Ascending aorta (tissue), 2 donors: ENCODE measurements at regions of chr11 and their contacts with region 1.

Region 1: DNA sequence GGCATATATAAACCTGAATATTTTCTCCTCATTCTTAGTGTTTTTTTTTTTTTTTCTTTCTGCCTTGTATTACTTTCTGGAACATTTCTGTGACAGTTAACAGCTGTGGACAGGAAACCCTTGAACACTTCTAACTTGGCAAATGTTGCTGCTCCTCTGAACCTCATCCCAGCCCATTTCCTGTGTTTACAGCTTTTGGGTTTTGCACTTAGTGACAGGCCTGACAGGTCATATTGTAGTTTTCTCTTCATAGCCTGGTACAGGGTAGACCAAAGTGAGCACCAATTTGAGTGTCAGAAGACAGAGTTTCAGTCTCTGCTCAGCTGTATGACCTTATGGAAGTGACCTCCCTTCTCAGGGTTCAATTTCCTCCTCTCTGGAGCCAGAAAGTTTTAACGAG is 91.6 kb downstream of the STIM1 start:
- DNase-seq: peak in 1 of 2 donors; percentile 67
- H3K4me3 ChIP-seq: no peak overlapping the region
- H3K27ac ChIP-seq: peak overlapping the region; percentile 85 to 88
- H3K4me1 ChIP-seq: peaks cover 51 to 79% of the 10 kb centered on the region in 2 donors
- H3K27me3 ChIP-seq: no peaks in the 10 kb centered on the region
- CTCF ChIP-seq: no peak

Region 2: DNA sequence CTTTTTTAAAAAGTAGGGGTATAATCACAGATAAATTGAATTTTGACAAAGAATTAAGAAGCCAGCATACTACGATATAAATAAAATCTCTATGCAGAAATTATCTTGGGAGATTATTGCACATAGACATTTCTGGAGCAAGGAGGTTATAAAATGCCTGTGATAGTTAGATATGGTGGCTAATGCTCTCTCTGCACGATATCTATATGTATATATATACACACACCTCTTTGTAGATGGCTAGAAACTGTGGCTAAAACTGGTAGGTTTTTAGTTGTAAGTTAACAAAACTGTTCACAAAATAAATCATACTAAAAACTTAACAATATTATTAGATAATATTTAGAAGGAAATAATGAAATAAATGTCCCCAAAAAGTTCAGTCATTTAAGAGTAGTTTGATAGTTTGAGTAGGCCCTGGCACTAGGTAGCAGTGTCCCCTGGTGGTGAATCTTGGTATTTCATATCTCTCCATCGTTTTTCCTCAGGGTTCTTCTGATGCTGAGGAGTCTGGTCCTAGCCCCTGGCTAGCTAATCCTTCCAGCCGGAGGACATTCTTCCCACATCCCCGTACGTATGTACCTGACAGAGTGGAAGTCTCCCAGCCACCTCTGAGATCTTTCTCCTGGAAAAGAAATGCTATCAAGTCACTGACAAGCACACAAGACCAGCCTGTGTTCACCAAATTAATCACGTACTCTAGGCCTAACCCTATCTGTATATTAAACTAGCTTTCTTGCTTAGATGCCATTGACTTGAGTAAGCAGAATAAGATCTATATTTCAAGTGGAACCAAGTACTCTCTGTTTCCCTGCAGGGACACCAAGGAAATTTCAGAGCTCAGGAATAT is 337.4 kb before region 1 on chr11:
- intact Hi-C with region 1: no loop called
- DNase-seq: no peak
- H3K4me3 ChIP-seq: no peak overlapping the region
- H3K27ac ChIP-seq: no peak overlapping the region
- H3K4me1 ChIP-seq: no peaks in the 10 kb centered on the region
- H3K27me3 ChIP-seq: no peaks in the 10 kb centered on the region
- CTCF ChIP-seq: peak; percentile 31 to 79 (median 75)

Region 3: DNA sequence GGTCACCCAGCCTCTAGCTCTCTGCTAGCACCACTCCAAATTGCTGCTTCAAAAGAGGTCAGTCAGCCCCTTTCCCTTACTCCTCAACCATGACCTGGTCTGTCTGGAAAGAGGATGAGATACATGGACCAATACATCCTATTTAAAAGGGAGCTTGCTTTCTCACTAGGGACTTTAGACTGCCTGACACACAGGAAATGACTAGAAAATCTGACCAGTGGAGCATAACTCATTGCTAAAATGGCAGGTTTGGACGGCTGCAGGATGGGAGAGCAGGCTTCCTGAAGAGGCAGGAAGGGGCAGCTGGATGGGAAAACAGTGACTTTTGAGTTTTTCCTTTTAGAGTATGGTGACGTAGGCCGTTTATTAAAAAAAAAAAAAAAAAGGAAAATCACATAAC is 66.3 kb before region 1 on chr11:
- intact Hi-C with region 1: no loop called
- DNase-seq: no peak
- H3K4me3 ChIP-seq: no peak overlapping the region
- H3K27ac ChIP-seq: peak overlapping the region; percentile 77 to 80
- H3K4me1 ChIP-seq: peaks cover 0 to 23% of the 10 kb centered on the region in 2 donors
- H3K27me3 ChIP-seq: no peaks in the 10 kb centered on the region
- CTCF ChIP-seq: no peak

Region 4: DNA sequence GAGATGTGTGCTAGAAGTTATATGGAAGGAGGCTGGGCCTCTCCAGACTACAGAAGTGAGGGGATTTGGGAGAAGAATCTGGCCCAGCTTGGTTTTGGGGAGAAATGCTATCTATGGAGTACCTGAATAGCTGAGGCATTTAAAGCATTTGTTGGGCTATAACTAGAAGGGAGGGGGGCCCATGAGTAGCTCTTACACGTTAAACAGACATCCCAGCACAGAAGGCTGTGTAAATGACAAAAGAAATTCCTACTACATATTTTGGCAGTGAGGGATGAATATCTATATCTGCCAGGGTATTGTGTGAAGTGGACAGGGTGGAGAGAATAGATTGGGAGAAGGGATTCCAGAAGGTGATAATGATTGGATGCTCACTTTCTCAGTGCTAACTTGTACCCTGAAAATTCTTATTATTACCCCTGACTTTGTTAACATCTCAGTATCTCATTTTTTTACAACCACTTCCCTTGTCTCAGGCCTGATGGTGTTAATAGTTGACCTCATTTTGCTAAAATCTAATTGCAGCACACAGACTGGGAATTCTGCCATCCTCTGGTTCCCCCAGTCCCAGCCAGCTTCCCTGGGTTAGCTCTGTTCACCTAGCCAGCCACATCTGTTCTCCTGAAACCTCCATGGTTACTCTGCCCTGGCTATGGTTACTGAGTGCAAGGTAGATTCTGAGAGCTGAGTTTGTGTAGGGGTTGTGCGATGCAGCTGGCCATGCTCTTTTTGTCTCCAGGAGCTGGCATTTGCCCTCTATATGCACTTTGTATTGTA is 118.7 kb after region 1 on chr11:
- intact Hi-C with region 1: loop called (anchors 5 kb)
- DNase-seq: no peak
- H3K4me3 ChIP-seq: no peak overlapping the region
- H3K27ac ChIP-seq: peak overlapping the region; percentile 53 to 58
- H3K4me1 ChIP-seq: peaks cover 19 to 40% of the 10 kb centered on the region in 2 donors
- H3K27me3 ChIP-seq: no peaks in the 10 kb centered on the region
- CTCF ChIP-seq: no peak